OCI-LY7 (cell line): ENCODE measurements at regions of chr7 and their contacts with region 1.

Region 1: GRCh38 chr7:98240961-98241674 is 10.9 kb downstream of the TECPR1 start:
- DNase-seq: peak; percentile 66
- H3K4me3 ChIP-seq: no peak overlapping the region
- H3K27ac ChIP-seq: no peak overlapping the region
- H3K4me1 ChIP-seq: no peaks in the 10 kb centered on the region
- CTCF ChIP-seq: peak; percentile 82

Region 2: GRCh38 chr7:98021588-98022351 is 219.3 kb before region 1 on chr7:
- CTCF ChIA-PET with region 1: no interaction called
- POLR2A ChIA-PET with region 1: no interaction called
- intact Hi-C with region 1: loop called (anchors 1 kb)
- DNase-seq: peak; percentile 73
- H3K4me3 ChIP-seq: no peak overlapping the region
- H3K27ac ChIP-seq: no peak overlapping the region
- H3K4me1 ChIP-seq: no peaks in the 10 kb centered on the region
- CTCF ChIP-seq: peak; percentile 94

Region 3: GRCh38 chr7:98168181-98168905 is 72.8 kb before region 1 on chr7:
- CTCF ChIA-PET with region 1: no interaction called
- POLR2A ChIA-PET with region 1: no interaction called
- intact Hi-C with region 1: loop called (anchors 5 kb)
- DNase-seq: peak; percentile 64
- H3K4me3 ChIP-seq: no peak overlapping the region
- H3K27ac ChIP-seq: no peak overlapping the region
- H3K4me1 ChIP-seq: no peaks in the 10 kb centered on the region
- CTCF ChIP-seq: peak; percentile 86

Region 4: GRCh38 chr7:98459529-98459928 is 218.4 kb after region 1 on chr7:
- CTCF ChIA-PET with region 1: no interaction called
- POLR2A ChIA-PET with region 1: no interaction called
- intact Hi-C with region 1: no loop called
- DNase-seq: no peak
- H3K4me3 ChIP-seq: no peak overlapping the region
- H3K27ac ChIP-seq: no peak overlapping the region
- H3K4me1 ChIP-seq: no peaks in the 10 kb centered on the region
- CTCF ChIP-seq: no peak